ENCODE measurements at regions of chr11 and their contacts with region 1.

Region 1: DNA sequence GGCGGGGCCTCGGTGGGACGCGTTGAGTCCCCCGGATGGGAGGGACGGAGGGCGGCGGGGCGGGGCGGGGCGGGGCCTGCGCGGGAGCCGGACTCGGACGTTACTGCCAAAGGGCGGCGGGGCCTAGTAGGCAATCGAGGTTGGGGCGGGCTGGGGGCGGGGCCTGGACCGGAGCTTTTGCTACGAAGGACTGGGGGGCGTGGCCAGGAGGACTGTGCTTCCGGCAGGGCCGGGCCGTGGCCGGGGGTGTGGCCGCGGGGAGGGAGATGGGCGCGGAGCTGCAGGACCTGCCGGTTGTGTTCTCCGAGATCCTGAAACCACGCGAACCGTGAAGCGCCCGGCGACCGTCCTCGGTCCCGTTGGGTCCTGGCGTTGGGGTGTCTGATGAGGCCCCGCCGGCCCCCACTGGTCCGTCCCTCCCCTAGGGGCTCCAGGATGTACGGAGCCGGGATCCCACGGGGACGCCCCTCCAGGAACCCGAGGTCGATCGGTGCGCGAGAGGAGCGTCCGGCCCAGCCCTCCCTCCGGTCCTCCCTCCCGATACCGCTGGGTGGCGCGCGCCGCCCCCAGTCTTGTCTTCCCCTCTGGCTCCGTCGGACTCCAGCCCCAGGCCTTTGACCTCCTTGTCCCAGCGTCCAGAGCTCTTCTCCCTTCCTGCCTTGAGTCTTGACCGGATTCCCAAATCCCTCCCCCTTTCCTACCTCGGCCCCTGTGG is 648 bp upstream of the NUDT8 start:
- DNase-seq: peak; percentile 93
- ATAC-seq: peak; percentile 79
- H3K4me3 ChIP-seq: peak overlapping the region; percentile 58 to 65
- H3K27ac ChIP-seq: peak overlapping the region; percentile 77
- H3K4me1 ChIP-seq: peaks cover 5 to 25% of the 10 kb centered on the region in 2 experiments; a peak in 3 of 4 replicates
- H3K27me3 ChIP-seq: no peaks in the 10 kb centered on the region
- CTCF ChIP-seq: peak; percentile 58 to 77 (median 71)
- POLR2A ChIP-seq: peak; percentile 18
- RAD21 ChIP-seq: peak; percentile 66

Region 2: DNA sequence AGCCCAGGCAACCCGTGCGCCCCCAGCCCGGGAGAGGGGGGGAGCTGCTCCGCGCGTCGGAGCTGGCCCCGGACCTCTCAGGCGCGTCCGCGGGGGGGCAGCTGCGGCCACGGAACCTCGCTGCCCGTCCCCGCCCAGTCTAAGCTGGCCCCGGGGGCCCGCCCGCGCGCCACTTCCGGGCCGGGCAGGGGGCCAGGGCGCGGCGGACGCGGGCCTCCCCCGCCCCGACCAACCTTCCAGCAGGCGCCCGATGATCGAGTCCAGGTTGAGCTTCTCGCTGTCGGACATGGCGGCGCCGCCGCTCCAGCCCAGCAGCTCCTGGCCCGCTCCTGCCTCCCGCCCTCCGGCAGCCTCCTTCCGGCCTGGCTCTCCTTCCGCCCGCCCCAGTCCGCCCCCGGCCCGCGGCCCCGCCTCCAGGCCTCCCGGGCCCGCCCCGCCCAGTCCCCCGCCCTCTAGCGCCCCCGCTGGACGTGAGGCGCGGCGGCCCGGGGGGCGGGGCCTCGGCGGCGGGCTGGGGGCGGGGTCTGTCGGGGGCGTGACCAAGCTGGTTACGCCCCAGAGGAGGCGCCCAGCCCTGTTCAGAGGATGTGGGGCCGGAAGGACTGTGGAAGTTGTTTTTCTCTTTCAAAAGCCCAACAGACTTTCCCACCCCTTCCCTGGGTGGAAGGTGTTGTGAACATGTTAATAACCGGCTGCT is 228.7 kb before region 1 on chr11 and contains the start of gene PPP1CA:
- CTCF ChIA-PET with region 1: interaction called, 10 read pairs
- POLR2A ChIA-PET with region 1: no interaction called
- RAD21 ChIA-PET with region 1: no interaction called
- intact Hi-C with region 1: no loop called
- DNase-seq: peak; percentile 53
- ATAC-seq: peak; percentile 90
- H3K4me3 ChIP-seq: peak within 1 kb of the TSS; percentile 82 to 90
- H3K27ac ChIP-seq: peak within 1 kb of the TSS; percentile 99
- H3K4me1 ChIP-seq: peaks cover 9 to 18% of the 10 kb centered on the region in 2 experiments
- H3K27me3 ChIP-seq: no peaks in the 10 kb centered on the region
- CTCF ChIP-seq: peak in 1 of 3 experiments; percentile 33; a peak in 3 of 6 replicates
- POLR2A ChIP-seq: peak; percentile 24
- RAD21 ChIP-seq: peak; percentile 48
- total RNA-seq, gene PPP1CA: 238 TPM

Region 3: DNA sequence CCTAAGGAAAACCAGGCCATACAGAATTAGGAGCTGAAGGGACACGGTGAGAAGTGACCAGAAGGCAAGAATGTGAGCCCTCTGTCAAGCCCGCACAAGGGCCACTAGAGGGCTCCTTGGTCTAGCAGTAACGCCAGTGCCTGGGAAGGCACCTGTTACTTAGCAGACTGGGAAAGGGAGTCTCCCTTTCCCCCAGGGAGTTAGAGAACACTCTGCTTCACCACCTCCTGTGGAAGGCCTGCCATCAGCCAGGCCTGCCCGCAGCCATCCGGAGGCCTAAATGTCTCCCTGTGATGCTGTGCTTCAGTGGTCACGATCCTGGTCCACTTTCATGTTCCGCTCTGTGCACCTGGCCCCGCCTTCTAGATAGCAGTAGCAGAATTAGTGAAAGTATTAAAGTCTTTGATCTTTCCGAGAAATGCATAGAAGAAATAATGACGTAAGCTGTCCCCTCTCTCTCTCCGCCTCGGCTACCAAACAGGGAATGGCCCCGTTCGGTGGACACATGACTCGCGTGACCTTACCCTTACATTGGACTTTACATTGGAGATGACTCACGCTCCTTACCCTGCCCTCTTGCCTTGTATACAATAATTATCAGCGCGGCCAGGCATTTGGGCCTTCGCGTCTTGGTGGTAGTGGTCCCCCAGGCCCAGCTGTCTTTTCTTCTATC is 57.5 kb before region 1 on chr11:
- CTCF ChIA-PET with region 1: interaction called, 14 read pairs
- POLR2A ChIA-PET with region 1: interaction called, 6 read pairs
- RAD21 ChIA-PET with region 1: no interaction called
- intact Hi-C with region 1: no loop called
- DNase-seq: peak; percentile 65
- ATAC-seq: peak; percentile 91
- H3K4me3 ChIP-seq: no peak overlapping the region
- H3K27ac ChIP-seq: no peak overlapping the region
- H3K4me1 ChIP-seq: peaks cover 0 to 3% of the 10 kb centered on the region in 2 experiments; a peak in 1 of 4 replicates
- H3K27me3 ChIP-seq: no peaks in the 10 kb centered on the region
- CTCF ChIP-seq: peak; percentile 62 to 90 (median 84)
- POLR2A ChIP-seq: no peak
- RAD21 ChIP-seq: peak; percentile 87

Region 4: DNA sequence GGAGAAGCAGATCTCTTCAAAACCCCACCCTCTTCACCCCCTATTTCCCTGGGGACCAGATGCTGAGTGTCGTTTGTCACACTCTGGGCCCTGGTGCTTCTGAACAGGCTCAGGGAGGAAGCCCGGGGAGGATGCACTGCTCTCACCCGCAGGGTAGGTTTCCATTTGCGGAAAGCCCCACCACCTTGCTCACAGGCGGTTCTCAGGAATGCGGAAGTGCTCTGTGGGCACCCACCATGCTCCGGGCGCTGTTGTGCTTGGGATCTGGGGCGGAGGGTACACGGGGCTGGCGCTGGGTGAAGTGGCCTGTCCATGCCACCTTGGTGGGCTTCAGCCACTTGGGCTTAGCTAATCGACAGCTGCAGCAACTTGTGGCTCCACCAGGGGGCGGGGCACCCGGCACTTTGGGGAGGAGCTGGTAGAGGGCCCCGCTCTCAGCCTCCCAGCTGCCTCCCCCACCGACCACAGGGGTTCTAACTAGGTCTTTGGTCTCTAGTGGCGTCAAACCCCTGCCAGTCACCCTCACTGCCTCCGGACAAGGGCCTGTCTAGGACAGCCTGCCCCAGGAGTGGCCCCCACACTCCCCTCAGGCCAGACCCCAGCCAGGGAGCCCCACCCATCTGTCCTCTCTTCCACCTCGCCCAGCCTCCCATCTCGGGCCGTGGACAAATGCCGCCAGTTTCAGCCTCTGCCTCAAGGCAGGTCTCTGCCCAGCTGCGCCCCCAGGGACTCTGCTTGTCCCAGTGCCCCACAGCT is 16.2 kb before region 1 on chr11:
- CTCF ChIA-PET with region 1: interaction called, 15 read pairs
- POLR2A ChIA-PET with region 1: interaction called, 3 read pairs
- RAD21 ChIA-PET with region 1: no interaction called
- intact Hi-C with region 1: no loop called
- DNase-seq: peak; percentile 15
- ATAC-seq: peak; percentile 66
- H3K4me3 ChIP-seq: no peak overlapping the region
- H3K27ac ChIP-seq: peak overlapping the region; percentile 47
- H3K4me1 ChIP-seq: peaks cover 2 to 13% of the 10 kb centered on the region in 2 experiments; a peak in 2 of 4 replicates
- H3K27me3 ChIP-seq: no peaks in the 10 kb centered on the region
- CTCF ChIP-seq: peak; percentile 48 to 85 (median 72); a peak in 5 of 6 replicates
- POLR2A ChIP-seq: no peak
- RAD21 ChIP-seq: no peak

Region 5: GRCh38 chr11:67648140-67649123 is 18.0 kb after region 1 on chr11:
- CTCF ChIA-PET with region 1: interaction called, 10 read pairs
- POLR2A ChIA-PET with region 1: no interaction called
- RAD21 ChIA-PET with region 1: no interaction called
- intact Hi-C with region 1: no loop called
- DNase-seq: peak; percentile 59
- ATAC-seq: peak; percentile 99
- H3K4me3 ChIP-seq: no peak overlapping the region
- H3K27ac ChIP-seq: no peak overlapping the region
- H3K4me1 ChIP-seq: peaks cover 2 to 17% of the 10 kb centered on the region in 2 experiments; a peak in 3 of 4 replicates
- H3K27me3 ChIP-seq: no peaks in the 10 kb centered on the region
- CTCF ChIP-seq: peak; percentile 73 to 93 (median 84)
- POLR2A ChIP-seq: no peak
- RAD21 ChIP-seq: peak; percentile 70

Region 6: GRCh38 chr11:67658691-67659271 is 28.4 kb after region 1 on chr11:
- CTCF ChIA-PET with region 1: interaction called, 34 read pairs
- POLR2A ChIA-PET with region 1: no interaction called
- RAD21 ChIA-PET with region 1: interaction called in 1 of 2 experiments, 6 read pairs
- intact Hi-C with region 1: no loop called
- DNase-seq: no peak
- ATAC-seq: no peak
- H3K4me3 ChIP-seq: no peak overlapping the region
- H3K27ac ChIP-seq: no peak overlapping the region
- H3K4me1 ChIP-seq: no peaks in the 10 kb centered on the region
- H3K27me3 ChIP-seq: no peaks in the 10 kb centered on the region
- CTCF ChIP-seq: no peak
- POLR2A ChIP-seq: no peak
- RAD21 ChIP-seq: no peak

Region 7: DNA sequence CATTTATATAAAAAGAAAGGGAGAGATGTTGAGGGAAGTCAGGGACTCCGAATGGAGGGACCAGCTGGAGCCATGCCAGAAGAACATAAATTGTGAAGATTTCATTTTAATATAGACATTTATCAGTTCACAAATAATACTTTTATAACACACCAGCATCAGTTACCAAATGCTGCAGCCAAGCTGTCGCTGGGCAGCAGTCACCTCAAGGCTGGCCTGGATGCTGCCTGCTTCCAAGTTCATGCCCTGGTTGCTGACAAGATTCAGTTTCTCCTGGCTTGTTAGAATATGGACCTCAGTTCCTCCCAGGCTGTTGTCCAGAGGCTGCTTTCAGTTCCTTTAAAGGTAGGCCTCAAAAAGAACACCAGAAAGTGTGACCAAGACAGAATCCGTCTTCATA is 74.9 kb after region 1 on chr11:
- CTCF ChIA-PET with region 1: interaction called, 7 read pairs
- POLR2A ChIA-PET with region 1: no interaction called
- RAD21 ChIA-PET with region 1: no interaction called
- intact Hi-C with region 1: loop called (anchors 10 kb)
- DNase-seq: no peak
- ATAC-seq: no peak
- H3K4me3 ChIP-seq: no peak overlapping the region
- H3K27ac ChIP-seq: no peak overlapping the region
- H3K4me1 ChIP-seq: peaks cover 0 to 8% of the 10 kb centered on the region in 2 experiments; a peak in 3 of 4 replicates
- H3K27me3 ChIP-seq: no peaks in the 10 kb centered on the region
- CTCF ChIP-seq: no peak
- POLR2A ChIP-seq: no peak
- RAD21 ChIP-seq: no peak